ENCODE measurements at regions of chr5 and their contacts with region 1.

Region 1: DNA sequence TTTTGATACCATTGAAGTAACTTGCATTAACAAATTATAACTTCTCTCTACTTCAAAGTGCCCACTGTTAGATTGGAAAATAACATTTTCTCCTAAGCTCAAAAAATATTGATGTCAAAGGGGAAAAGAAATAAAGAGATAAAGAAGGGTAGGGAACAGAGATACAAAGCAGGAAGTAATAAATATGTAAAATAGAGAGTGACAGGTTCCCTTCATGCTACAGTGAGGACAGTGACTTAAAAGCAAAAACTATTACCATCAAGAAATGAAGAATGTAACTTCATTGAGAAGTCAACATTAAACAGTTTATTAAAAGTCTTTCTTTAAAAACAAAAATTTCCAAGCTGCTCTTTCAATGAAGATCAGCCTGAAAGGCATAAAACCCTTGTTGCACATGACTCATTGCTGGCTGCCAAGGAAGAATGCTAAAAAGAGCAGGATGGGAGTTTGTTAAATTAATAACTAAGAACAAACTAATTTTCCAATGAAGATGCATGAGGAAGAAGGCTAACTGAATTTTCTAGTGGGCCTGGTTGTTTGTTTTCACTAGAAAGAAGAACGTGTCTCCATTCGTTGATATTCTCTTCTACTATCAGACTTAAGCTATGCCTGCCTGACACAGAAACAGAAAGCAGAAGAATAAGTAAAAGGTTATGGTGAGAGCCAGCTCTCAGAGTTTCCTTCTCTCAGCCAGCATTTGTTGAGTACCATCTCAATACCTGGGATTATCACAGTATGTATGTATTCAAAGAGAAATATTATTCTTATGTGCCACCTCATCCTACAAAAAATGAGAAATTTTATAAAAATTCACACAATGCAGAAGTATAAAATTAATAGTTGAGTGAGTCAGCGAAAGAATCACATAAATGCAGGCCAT is 197.8 kb upstream of the NREP start:
- DNase-seq: peak; percentile 42
- H3K4me3 ChIP-seq: no peak overlapping the region
- H3K27ac ChIP-seq: peak overlapping the region; percentile 100
- H3K27me3 ChIP-seq: no peaks in the 10 kb centered on the region
- CTCF ChIP-seq: no peak

Region 2: GRCh38 chr5:111313017-111313724 is 641.6 kb before region 1 on chr5:
- in situ Hi-C with region 1: no loop called
- DNase-seq: no peak
- H3K4me3 ChIP-seq: no peak overlapping the region
- H3K27ac ChIP-seq: no peak overlapping the region
- H3K27me3 ChIP-seq: no peaks in the 10 kb centered on the region
- CTCF ChIP-seq: no peak

Region 3: DNA sequence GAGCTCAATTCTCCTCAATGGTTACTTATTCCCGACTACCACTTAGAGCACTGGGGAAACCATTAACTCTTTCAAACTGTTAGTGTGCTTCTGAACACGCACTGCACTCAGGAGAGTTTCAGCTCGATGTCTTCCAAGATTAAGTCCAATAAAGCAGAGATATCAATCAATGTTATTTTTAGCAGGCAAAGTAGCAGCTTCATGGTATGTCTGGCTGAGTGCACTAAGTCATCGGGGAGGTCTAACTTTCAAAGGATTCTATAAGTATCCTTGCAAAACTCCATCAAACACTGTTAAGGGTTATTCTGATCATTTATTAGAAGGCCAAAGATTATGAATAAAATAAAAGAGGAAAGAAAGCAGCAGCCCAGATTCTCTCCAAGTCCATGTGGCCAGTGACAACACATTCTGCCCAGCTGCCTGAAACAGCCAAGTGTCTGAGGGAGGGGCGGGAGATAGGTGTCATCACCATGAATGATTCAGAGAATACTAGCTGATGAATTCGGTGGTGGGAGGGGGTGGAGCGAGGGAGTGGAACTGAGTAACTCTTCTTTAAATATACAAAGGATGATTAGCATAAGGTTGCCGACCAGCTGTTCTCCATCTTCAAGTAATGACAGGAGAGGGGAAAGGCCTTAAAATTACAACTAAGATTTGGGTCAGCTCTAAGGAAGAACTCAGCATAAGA is 219.0 kb before region 1 on chr5:
- in situ Hi-C with region 1: loop called (anchors 25 kb)
- DNase-seq: peak; percentile 98
- H3K4me3 ChIP-seq: no peak overlapping the region
- H3K27ac ChIP-seq: peak overlapping the region; percentile 58
- H3K27me3 ChIP-seq: no peaks in the 10 kb centered on the region
- CTCF ChIP-seq: no peak

Region 4: GRCh38 chr5:111774525-111774924 is 180.2 kb before region 1 on chr5:
- in situ Hi-C with region 1: no loop called
- DNase-seq: peak; percentile 29
- H3K4me3 ChIP-seq: no peak overlapping the region
- H3K27ac ChIP-seq: no peak overlapping the region
- H3K27me3 ChIP-seq: no peaks in the 10 kb centered on the region
- CTCF ChIP-seq: no peak